Activated naive CD4-positive, alpha-beta T cell treated with anti-CD3 and anti-CD28 coated beads for 36 hours (primary cell): ENCODE measurements at regions of chr1 and their contacts with region 1.

Region 1: GRCh38 chr1:225467193-225468020 is 39.6 kb upstream of the LBR start:
- DNase-seq: peak; percentile 91
- H3K4me3 Mint-ChIP-seq: peak overlapping the region; percentile 90
- H3K27ac Mint-ChIP-seq: peak overlapping the region; percentile 99
- H3K4me1 Mint-ChIP-seq: peaks cover 17% of the 10 kb centered on the region
- H3K27me3 Mint-ChIP-seq: no peaks in the 10 kb centered on the region

Region 2: GRCh38 chr1:225428068-225428880 is 39.1 kb before region 1 on chr1:
- CTCF ChIA-PET with region 1: interaction called, 4 read pairs
- intact Hi-C with region 1: loop called (anchors 1 kb)
- DNase-seq: peak; percentile 94
- H3K4me3 Mint-ChIP-seq: peak overlapping the region; percentile 85
- H3K27ac Mint-ChIP-seq: peak overlapping the region; percentile 96
- H3K4me1 Mint-ChIP-seq: peaks cover 43% of the 10 kb centered on the region
- H3K27me3 Mint-ChIP-seq: no peaks in the 10 kb centered on the region

Region 3: GRCh38 chr1:225454733-225455132 is 12.7 kb before region 1 on chr1:
- CTCF ChIA-PET with region 1: no interaction called
- intact Hi-C with region 1: loop called (anchors 1 kb)
- DNase-seq: peak; percentile 89
- H3K4me3 Mint-ChIP-seq: peak overlapping the region; percentile 25
- H3K27ac Mint-ChIP-seq: peak overlapping the region; percentile 82
- H3K4me1 Mint-ChIP-seq: peaks cover 30% of the 10 kb centered on the region
- H3K27me3 Mint-ChIP-seq: no peaks in the 10 kb centered on the region

Region 4: GRCh38 chr1:225642177-225642576 is 174.8 kb after region 1 on chr1:
- CTCF ChIA-PET with region 1: no interaction called
- intact Hi-C with region 1: no loop called
- DNase-seq: no peak
- H3K4me3 Mint-ChIP-seq: no peak overlapping the region
- H3K27ac Mint-ChIP-seq: no peak overlapping the region
- H3K4me1 Mint-ChIP-seq: no peaks in the 10 kb centered on the region
- H3K27me3 Mint-ChIP-seq: peaks cover 10% of the 10 kb centered on the region

Region 5: DNA sequence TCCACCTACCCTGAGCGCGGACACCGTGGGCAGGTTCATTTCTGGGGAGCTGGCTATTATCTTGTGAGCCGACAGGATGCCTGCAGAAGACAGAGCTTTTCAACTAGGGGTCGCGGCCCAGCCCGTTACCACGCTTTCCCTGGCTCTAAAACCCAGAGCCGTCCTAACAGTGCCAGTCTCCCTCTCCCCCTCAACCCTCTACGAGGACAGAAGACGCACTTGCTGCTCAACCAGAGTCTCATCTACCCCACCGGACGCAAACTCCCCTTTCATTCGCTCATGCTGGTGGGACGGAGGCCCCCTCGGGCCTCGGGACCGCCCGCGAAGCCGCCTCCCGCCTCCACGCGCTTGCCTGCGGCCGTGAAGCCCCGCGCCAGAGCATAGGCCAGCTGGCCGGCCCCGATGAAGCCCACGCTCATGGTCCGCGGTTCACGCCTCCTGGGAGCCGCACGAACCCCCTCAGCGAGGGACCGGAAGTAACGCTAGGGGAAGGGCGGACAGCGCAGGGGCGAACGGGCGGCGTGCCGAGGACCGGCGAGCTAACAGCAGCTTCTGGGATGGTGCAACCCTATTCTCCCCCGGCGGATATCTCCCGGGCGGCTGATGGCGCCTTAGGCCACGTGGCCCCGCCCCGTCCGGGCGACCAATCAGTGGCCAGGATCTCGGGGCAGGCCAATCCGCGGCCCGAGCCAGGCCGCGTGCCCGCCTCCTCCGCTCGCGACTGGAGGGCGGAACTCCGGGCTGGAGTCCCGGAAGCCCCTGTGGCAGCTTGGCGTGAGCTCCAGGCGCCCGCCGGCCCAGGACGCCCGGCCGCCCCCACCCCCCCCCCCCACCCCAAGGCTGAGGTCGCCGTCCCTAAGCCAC is 456.5 kb after region 1 on chr1 and contains the start of gene PYCR2:
- CTCF ChIA-PET with region 1: no interaction called
- intact Hi-C with region 1: loop called (anchors 1 kb)
- DNase-seq: peak; percentile 96
- H3K4me3 Mint-ChIP-seq: peak within 1 kb of the TSS; percentile 95
- H3K27ac Mint-ChIP-seq: peak within 1 kb of the TSS; percentile 90
- H3K4me1 Mint-ChIP-seq: peaks cover 59% of the 10 kb centered on the region
- H3K27me3 Mint-ChIP-seq: no peaks in the 10 kb centered on the region
- total RNA-seq, gene PYCR2: 143 to 149 TPM